MCF 10A (cell line): ENCODE measurements at regions of chr4 and their contacts with region 1.

Region 1: DNA sequence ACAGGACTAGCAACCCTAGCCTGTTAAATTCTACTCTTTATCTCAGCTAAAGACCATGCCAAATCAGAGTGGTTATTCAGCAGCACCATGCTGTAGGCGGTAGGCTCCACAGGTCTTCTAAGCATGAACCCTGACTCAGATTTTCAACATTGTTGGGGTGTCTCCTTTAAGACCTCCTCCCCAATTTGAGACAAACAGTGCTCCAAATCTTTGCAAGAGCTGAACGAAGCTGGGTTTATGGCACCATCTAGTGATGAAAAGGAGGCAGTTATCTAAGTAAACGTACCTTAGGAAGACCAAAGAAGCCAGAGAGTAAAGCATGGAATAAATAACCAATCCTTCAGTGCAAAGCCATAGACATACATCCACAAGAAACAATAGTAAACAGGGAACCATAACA is 334.5 kb upstream of the SLC7A11 start:
- DNase-seq: peak; percentile 58
- H3K4me3 Mint-ChIP-seq: no peak overlapping the region
- H3K27ac Mint-ChIP-seq: no peak overlapping the region
- H3K4me1 Mint-ChIP-seq: no peaks in the 10 kb centered on the region
- H3K27me3 Mint-ChIP-seq: no peaks in the 10 kb centered on the region
- CTCF ChIP-seq: peak; percentile 51

Region 2: GRCh38 chr4:138182838-138183426 is 393.8 kb before region 1 on chr4:
- CTCF ChIA-PET with region 1: interaction called, 10 read pairs
- POLR2A ChIA-PET with region 1: no interaction called
- intact Hi-C with region 1: loop called (anchors 5 kb)
- DNase-seq: peak; percentile 54
- H3K4me3 Mint-ChIP-seq: no peak overlapping the region
- H3K27ac Mint-ChIP-seq: no peak overlapping the region
- H3K4me1 Mint-ChIP-seq: peaks cover 5% of the 10 kb centered on the region
- H3K27me3 Mint-ChIP-seq: no peaks in the 10 kb centered on the region
- CTCF ChIP-seq: peak; percentile 39

Region 3: GRCh38 chr4:138190452-138190858 is 386.2 kb before region 1 on chr4:
- CTCF ChIA-PET with region 1: interaction called, 6 read pairs
- POLR2A ChIA-PET with region 1: no interaction called
- intact Hi-C with region 1: loop called (anchors 5 kb)
- DNase-seq: no peak
- H3K4me3 Mint-ChIP-seq: no peak overlapping the region
- H3K27ac Mint-ChIP-seq: no peak overlapping the region
- H3K4me1 Mint-ChIP-seq: peaks cover 11% of the 10 kb centered on the region
- H3K27me3 Mint-ChIP-seq: no peaks in the 10 kb centered on the region
- CTCF ChIP-seq: no peak

Region 4: DNA sequence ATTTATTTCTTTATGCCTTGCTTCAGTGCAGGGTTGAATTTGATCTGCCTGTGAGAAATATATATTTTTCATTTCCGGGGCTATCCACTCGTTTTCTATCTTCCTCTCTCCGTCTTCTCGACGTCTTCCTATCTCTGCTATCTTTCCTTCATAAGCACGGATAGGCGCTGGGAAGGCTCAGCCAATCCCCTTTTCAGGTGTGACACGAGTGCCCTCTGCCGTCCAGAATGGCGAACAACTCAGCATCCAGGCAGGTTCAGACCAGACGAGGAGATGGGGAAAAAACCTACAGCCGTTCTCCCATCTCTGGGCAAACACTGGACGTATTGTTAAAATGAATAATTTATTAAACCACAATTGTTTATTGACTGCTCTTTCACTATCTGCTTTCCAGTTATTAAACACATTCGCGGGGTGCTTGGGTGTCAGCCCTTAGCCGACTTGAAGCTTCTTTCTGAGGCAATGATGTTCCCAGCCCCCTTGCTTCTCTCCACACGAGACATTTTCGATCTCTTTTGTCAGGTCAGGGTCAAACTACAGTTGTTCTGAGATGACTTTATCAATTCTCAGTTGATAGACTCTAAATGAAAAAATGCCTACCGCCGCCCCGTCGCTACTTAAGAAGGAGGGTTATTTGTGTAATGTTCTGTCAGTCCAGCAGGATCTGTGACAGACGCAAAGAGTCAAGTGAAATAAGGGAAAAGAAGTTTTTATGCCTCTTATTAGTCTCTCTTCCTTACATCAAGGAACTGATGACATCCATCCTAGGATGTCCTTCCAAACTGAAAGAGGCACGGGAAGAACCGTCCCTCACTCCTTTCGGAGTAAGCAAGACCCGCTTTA is 342.6 kb after region 1 on chr4:
- CTCF ChIA-PET with region 1: no interaction called
- POLR2A ChIA-PET with region 1: no interaction called
- intact Hi-C with region 1: loop called (anchors 1 kb)
- DNase-seq: peak; percentile 85
- H3K4me3 Mint-ChIP-seq: no peak overlapping the region
- H3K27ac Mint-ChIP-seq: no peak overlapping the region
- H3K4me1 Mint-ChIP-seq: peaks cover 7% of the 10 kb centered on the region
- H3K27me3 Mint-ChIP-seq: no peaks in the 10 kb centered on the region
- CTCF ChIP-seq: peak; percentile 71